Activated CD8-positive, alpha-beta T cell treated with anti-CD3 and anti-CD28 coated beads for 36 hours (primary cell): ENCODE measurements at regions of chr18 and their contacts with region 1.

Region 1: GRCh38 chr18:10519999-10520935 is 5.6 kb upstream of the NAPG start:
- DNase-seq: peak; percentile 78
- ATAC-seq: peak; percentile 88
- H3K4me3 Mint-ChIP-seq: no peak overlapping the region
- H3K27ac Mint-ChIP-seq: no peak overlapping the region
- H3K4me1 Mint-ChIP-seq: peaks cover 18% of the 10 kb centered on the region
- H3K27me3 Mint-ChIP-seq: peaks cover 22% of the 10 kb centered on the region
- CTCF ChIP-seq: peak; percentile 62

Region 2: GRCh38 chr18:10032331-10033015 is 487.8 kb before region 1 on chr18:
- CTCF ChIA-PET with region 1: interaction called, 10 read pairs
- POLR2A ChIA-PET with region 1: no interaction called
- intact Hi-C with region 1: no loop called
- DNase-seq: peak; percentile 70
- ATAC-seq: peak; percentile 98
- H3K4me3 Mint-ChIP-seq: peak overlapping the region; percentile 72
- H3K27ac Mint-ChIP-seq: peak overlapping the region; percentile 72
- H3K4me1 Mint-ChIP-seq: peaks cover 8% of the 10 kb centered on the region
- H3K27me3 Mint-ChIP-seq: no peaks in the 10 kb centered on the region
- CTCF ChIP-seq: peak; percentile 48